IMR-90 (cell line): ENCODE measurements at regions of chr1 and their contacts with region 1.

Region 1: DNA sequence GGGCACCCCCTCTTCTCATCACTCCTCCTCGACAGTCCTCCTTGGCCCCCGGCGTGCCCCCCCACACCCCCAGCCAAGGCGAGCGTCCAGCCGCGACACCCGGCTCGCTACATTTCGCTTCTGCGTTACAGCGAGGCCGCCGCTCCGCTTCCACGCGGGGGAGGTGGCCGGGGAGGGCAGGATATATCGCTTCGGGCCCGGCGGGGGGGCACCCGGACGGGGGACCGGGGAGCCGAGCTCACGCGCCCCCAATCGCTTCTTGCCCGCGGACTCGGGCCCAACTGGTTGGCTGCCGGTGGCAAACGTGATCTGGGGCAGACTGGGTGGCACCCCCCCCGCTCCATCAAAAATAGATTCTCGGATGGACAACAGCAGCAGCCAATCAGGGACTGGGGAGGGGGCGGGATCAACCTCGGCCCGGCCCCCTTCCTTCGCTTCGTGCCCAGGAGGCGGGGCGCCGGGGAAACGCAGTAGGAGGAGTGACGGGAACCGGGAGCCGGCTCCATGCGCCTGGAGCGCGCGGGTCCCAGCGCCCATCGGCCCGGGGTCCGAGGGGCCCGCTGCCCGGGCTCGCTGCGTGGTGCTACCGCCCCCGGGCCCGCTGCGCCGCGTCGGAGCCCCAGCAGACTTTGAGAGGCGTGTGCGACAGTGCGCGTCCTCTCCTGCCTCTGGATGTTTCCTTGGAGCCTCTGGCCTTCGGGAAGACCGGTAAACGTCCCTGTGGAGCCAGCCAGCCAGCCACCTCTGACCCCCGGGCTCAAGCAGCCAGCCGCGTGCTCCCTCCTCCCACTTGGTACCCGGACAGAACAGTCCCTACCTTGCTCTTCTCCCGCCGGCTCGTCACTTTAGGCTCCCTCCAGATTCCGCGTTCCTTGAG is at the start of gene SLC41A1:
- DNase-seq: peak; percentile 85
- ATAC-seq: peak; percentile 95
- H3K4me3 ChIP-seq: peak within 1 kb of the TSS; percentile 63
- H3K27ac ChIP-seq: peak within 1 kb of the TSS; percentile 57
- H3K4me1 ChIP-seq: peaks cover 6% of the 10 kb centered on the region; the same call in 1 of the 2 replicates
- H3K27me3 ChIP-seq: no peaks in the 10 kb centered on the region; the same call in 1 of the 2 replicates
- CTCF ChIP-seq: no peak
- POLR2A ChIP-seq: peak; percentile 67; the same call in 1 of the 2 replicates
- RAD21 ChIP-seq: no peak
- total RNA-seq, gene SLC41A1: 6.3 and 6.7 TPM in 2 replicates

Region 2: DNA sequence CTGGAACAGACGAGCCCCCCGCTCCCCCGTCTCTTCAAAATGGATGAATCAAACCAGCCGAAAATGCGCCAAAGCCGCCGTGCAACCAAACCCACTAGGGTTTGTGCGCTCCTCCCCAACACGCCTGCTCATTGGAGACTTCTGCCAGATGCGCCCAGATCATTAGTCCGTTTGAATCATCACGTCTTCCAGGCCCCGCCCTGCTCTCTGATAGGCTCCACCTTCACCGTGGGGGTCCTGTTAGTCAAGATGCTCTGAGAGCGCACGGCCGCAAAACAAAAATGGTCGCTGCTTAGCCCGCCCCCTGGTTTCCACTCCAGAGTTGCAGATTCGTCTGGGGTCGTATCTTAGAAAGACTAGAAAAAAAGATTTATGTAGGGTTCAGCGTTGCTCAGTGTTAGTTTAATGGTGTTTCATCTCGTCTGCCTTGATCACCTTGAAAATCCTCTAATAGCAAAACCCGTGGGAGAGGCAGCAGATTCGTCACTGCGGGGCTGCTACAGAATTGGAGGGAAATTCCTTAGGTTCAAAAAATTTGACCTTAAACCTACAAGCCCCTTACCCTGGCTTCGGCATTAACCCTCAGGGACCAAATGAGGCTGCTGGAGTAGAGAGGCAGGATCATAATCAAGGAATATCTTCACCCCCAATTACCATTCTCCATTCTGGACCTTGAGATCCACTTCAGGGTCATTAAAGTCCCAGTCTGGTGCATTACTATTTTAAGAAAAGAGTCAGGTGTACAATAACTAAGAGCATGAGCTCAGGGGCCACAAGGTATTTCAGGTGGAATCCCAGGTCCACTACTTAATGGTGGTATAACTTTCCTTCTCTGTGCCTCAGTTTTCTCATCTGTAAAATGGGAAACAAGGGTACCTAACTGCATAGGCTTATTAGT is 62.7 kb before region 1 on chr1 and contains the start of gene NUCKS1:
- CTCF ChIA-PET with region 1: no interaction called
- POLR2A ChIA-PET with region 1: no interaction called
- dilution Hi-C with region 1: no loop called
- in situ Hi-C with region 1: no loop called
- intact Hi-C with region 1: loop called (anchors 2 kb)
- DNase-seq: peak; percentile 100
- ATAC-seq: peak; percentile 78
- H3K4me3 ChIP-seq: peak within 1 kb of the TSS; percentile 67
- H3K27ac ChIP-seq: peak within 1 kb of the TSS; percentile 88
- H3K4me1 ChIP-seq: no peaks in the 10 kb centered on the region
- H3K27me3 ChIP-seq: no peaks in the 10 kb centered on the region
- CTCF ChIP-seq: no peak
- POLR2A ChIP-seq: peak; percentile 83; the same call in 1 of the 2 replicates
- RAD21 ChIP-seq: no peak
- total RNA-seq, gene NUCKS1: 103 and 179 TPM in 2 replicates

Region 3: DNA sequence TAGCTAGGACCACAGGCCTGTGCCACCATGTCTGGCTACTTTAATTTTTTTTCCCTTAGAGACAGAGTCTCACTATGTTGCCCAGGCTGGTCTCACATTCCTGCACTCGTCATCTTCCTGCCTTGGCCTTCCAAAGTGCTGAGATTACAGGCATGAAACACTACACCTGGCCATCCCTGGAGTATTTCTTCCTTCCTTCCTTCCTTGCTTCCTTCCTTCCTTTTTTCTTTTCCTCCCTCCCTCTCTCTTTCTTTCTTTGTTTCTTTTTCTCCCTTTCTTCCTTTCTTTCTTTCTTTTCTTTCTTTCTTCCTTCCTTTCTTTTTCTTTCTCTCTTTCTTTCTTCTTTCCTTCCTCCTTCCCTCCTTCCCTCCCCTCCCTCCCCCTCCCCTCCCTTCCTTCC is 83.2 kb after region 1 on chr1:
- CTCF ChIA-PET with region 1: no interaction called
- POLR2A ChIA-PET with region 1: no interaction called
- dilution Hi-C with region 1: no loop called
- in situ Hi-C with region 1: no loop called
- intact Hi-C with region 1: loop called (anchors 5 kb)
- DNase-seq: no peak
- ATAC-seq: no peak
- H3K4me3 ChIP-seq: no peak overlapping the region
- H3K27ac ChIP-seq: no peak overlapping the region
- H3K4me1 ChIP-seq: peaks cover 3% of the 10 kb centered on the region; the same call in 1 of the 2 replicates
- H3K27me3 ChIP-seq: peaks cover 1% of the 10 kb centered on the region; the same call in 1 of the 2 replicates
- CTCF ChIP-seq: no peak
- POLR2A ChIP-seq: no peak
- RAD21 ChIP-seq: no peak

Region 4: GRCh38 chr1:205907794-205908193 is 94.7 kb after region 1 on chr1:
- CTCF ChIA-PET with region 1: interaction called, 4 read pairs
- POLR2A ChIA-PET with region 1: no interaction called
- dilution Hi-C with region 1: no loop called
- in situ Hi-C with region 1: no loop called
- intact Hi-C with region 1: loop called (anchors 2 kb)
- DNase-seq: peak; percentile 49
- ATAC-seq: peak; percentile 88
- H3K4me3 ChIP-seq: no peak overlapping the region
- H3K27ac ChIP-seq: no peak overlapping the region
- H3K4me1 ChIP-seq: no peaks in the 10 kb centered on the region
- H3K27me3 ChIP-seq: peaks cover 11% of the 10 kb centered on the region
- CTCF ChIP-seq: peak; percentile 64
- POLR2A ChIP-seq: no peak
- RAD21 ChIP-seq: peak; percentile 63